Panc1 (cell line): ENCODE measurements at regions of chr20 and their contacts with region 1.

Region 1: GRCh38 chr20:37911838-37912281 is 8.9 kb downstream of the VSTM2L start:
- DNase-seq: no peak
- ATAC-seq: no peak
- H3K4me3 ChIP-seq: no peak overlapping the region
- H3K27ac ChIP-seq: no peak overlapping the region
- H3K4me1 ChIP-seq: peaks cover 12% of the 10 kb centered on the region
- H3K27me3 ChIP-seq: no peaks in the 10 kb centered on the region
- CTCF ChIP-seq: no peak

Region 2: DNA sequence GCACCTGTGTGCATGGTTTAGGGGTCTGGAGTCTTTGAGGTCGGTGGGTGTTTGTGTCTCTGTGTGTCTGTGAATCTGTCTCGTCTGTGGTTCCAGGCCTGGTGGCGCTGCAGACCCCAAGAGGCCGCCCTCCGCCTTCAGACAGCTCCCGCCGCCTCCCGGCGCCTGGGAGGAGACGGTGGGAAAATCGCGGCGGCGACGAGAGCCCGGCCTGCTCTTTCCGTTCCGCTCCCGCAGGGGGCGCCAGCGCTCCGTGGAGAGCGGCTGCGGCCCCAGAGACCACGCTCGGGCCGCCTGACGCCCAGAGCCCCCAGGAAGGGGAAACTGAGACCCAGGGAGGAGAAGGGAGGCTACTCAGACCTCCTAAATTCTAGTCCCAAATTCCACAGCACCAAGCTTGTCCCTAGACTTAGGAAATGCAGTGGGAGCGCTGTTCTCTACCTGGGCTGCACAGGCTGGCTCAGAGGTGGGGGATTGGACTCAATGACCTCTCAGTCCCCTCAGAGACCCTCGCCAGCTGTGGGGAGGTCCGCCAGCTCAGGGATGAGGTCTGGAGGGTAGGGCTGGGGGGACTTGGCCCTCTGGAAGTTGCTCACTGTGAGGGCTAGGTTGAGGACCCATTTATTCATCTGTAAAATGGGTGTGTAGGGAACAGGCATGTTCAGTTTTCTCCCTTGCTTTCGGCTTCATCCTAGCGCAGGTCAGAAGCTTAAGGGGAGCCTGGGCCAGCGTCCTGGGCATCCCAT is 347.3 kb before region 1 on chr20:
- CTCF ChIA-PET with region 1: no interaction called
- POLR2A ChIA-PET with region 1: no interaction called
- in situ Hi-C with region 1: no loop called
- intact Hi-C with region 1: loop called (anchors 10 kb)
- DNase-seq: no peak
- ATAC-seq: peak; percentile 85
- H3K4me3 ChIP-seq: no peak overlapping the region
- H3K27ac ChIP-seq: no peak overlapping the region
- H3K4me1 ChIP-seq: no peaks in the 10 kb centered on the region; the same call in 1 of the 2 replicates
- H3K27me3 ChIP-seq: peaks cover 9% of the 10 kb centered on the region
- CTCF ChIP-seq: peak; percentile 98

Region 3: DNA sequence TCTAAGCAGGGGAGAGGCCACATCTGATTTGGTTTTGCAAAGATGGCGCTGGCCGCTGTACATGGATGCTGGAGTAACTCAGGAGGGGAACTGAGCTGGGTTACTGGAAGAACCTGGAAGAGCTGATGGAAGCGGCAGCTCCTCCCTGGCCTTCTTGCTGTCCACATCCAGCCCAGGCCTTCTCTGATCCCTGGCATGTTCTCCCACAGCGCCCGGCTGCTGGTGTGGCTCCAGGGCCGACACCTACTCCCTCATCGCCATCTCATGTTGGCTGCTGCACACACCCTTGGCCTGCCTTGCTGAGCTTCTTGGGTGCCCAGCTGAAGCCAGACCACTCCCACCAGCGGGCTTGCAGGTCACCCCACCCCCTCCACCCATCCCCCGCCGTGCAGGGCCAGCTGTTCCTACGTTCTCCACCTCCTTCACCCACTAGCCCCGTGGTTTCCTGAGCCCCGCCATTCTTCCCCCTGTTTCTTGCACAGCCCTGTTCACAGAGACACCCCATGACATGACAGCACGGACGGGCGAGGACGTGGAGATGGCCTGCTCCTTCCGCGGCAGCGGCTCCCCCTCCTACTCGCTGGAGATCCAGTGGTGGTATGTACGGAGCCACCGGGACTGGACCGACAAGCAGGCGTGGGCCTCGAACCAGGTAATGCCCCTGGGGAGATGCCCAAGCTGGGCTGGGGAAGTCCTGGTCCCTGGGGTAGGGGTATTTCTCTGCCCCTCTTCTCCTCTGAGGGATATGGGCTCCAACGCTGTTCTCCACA is 19.5 kb after region 1 on chr20:
- CTCF ChIA-PET with region 1: interaction called, 11 read pairs
- POLR2A ChIA-PET with region 1: interaction called, 5 read pairs
- in situ Hi-C with region 1: no loop called
- intact Hi-C with region 1: no loop called
- DNase-seq: no peak
- ATAC-seq: peak; percentile 44; the same call in 1 of the 2 replicates
- H3K4me3 ChIP-seq: no peak overlapping the region
- H3K27ac ChIP-seq: no peak overlapping the region
- H3K4me1 ChIP-seq: no peaks in the 10 kb centered on the region
- H3K27me3 ChIP-seq: no peaks in the 10 kb centered on the region
- CTCF ChIP-seq: no peak

Region 4: DNA sequence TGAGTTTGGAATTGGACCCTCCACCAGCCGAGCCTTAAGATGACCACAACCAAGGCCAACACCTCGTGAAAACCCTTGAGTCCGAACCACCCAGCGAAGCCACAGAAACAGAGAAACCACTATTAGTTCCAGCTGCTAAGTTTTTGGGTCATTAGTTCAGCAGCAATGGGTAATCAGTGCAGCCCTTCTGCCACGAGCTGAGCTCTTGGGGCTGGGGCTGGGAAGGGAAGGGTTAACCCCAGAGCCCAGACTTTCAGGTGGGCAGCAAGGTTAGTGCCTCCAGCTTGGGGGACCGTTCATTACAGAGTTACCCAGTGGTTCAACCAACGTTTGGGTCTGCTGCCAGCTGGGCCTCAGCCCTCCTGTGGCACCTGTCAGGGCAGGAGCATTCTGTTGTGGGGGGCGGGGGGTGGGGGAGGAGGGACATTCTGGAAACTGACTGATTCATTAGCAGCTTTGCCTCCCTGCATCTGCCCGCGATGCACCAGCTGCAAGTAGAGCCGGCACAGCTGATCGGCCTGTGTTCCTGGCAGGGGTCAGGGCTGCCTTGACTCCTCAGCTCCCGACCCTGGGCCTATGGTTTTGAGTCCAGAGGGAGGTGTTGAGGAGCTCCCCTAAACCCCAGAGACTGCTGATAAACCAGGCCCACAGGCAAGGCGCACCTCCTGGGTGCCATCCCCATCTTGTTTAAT is 200.5 kb after region 1 on chr20:
- CTCF ChIA-PET with region 1: interaction called, 11 read pairs
- POLR2A ChIA-PET with region 1: no interaction called
- in situ Hi-C with region 1: no loop called
- intact Hi-C with region 1: no loop called
- DNase-seq: no peak
- ATAC-seq: no peak
- H3K4me3 ChIP-seq: no peak overlapping the region
- H3K27ac ChIP-seq: peak overlapping the region; percentile 92
- H3K4me1 ChIP-seq: peaks cover 37% of the 10 kb centered on the region
- H3K27me3 ChIP-seq: no peaks in the 10 kb centered on the region
- CTCF ChIP-seq: no peak